Transverse colon (tissue), 4 donors: ENCODE measurements at regions of chr11 and their contacts with region 1.

Region 1: GRCh38 chr11:78564490-78565467 is 9.9 kb downstream of the NARS2 start:
- DNase-seq: peak; percentile 23
- H3K4me3 ChIP-seq: no peak overlapping the region
- H3K27ac ChIP-seq: no peak overlapping the region
- H3K4me1 ChIP-seq: peaks cover 9 to 37% (median 25%) of the 10 kb centered on the region in 4 donors
- H3K27me3 ChIP-seq: no peaks in the 10 kb centered on the region
- CTCF ChIP-seq: peak; percentile 68 to 88 (median 78)
- EP300 ChIP-seq: no peak
- POLR2A ChIP-seq: no peak

Region 2: DNA sequence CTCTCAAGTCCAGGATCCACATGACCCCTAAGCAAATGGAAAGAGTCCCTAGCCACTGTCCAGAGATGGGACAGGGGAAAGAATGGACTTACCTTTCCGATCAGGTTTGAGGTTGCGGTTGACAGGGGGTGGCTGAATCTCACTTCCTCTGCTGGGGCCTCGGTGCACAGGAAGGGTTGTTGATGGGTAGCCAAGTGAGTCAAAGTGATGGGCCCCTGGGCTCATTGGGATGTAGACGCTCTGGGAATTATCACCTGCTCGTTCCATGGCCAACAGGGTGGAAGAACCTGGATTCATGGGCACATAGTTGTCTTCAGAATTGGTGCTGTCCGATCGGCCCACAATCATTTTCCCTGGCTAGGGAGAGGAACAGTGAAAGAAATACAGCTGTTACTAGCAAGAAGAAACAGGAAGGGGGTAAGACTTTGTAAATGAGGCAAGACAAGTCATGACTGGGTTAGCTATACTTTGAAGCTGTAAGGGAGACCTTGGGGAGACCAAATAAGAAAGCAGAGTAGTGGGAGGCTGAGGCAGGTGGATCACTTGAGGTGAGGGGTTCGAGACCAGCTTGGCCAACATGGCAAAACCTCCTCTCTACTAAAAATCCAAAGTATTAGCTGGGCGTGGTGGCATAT is 341.3 kb before region 1 on chr11:
- in situ Hi-C with region 1: loop called (anchors 5 to 25 kb)
- intact Hi-C with region 1: no loop called
- DNase-seq: no peak
- H3K4me3 ChIP-seq: no peak overlapping the region
- H3K27ac ChIP-seq: no peak overlapping the region
- H3K4me1 ChIP-seq: peaks cover 0 to 4% (median 0%) of the 10 kb centered on the region in 4 donors
- H3K27me3 ChIP-seq: no peaks in the 10 kb centered on the region
- CTCF ChIP-seq: no peak
- EP300 ChIP-seq: no peak
- POLR2A ChIP-seq: no peak

Region 3: GRCh38 chr11:78365381-78365792 is 199.4 kb before region 1 on chr11:
- in situ Hi-C with region 1: no loop called
- intact Hi-C with region 1: no loop called
- DNase-seq: no peak
- H3K4me3 ChIP-seq: no peak overlapping the region
- H3K27ac ChIP-seq: no peak overlapping the region
- H3K4me1 ChIP-seq: peaks cover 0 to 26% (median 3%) of the 10 kb centered on the region in 4 donors
- H3K27me3 ChIP-seq: no peaks in the 10 kb centered on the region
- CTCF ChIP-seq: no peak
- EP300 ChIP-seq: no peak
- POLR2A ChIP-seq: no peak

Region 4: GRCh38 chr11:78416305-78417178 is 148.2 kb before region 1 on chr11:
- in situ Hi-C with region 1: loop called (anchors 10 kb)
- intact Hi-C with region 1: no loop called
- DNase-seq: peak; percentile 86
- H3K4me3 ChIP-seq: peak overlapping the region; percentile 81 to 100 (median 91)
- H3K27ac ChIP-seq: peak overlapping the region; percentile 97 to 99 (median 98)
- H3K4me1 ChIP-seq: peaks cover 13 to 48% (median 29%) of the 10 kb centered on the region in 4 donors
- H3K27me3 ChIP-seq: no peaks in the 10 kb centered on the region
- CTCF ChIP-seq: peak; percentile 45 to 70 (median 54)
- EP300 ChIP-seq: no peak
- POLR2A ChIP-seq: peak; percentile 73